ENCODE measurements at regions of chr20 and their contacts with region 1.

Region 1: DNA sequence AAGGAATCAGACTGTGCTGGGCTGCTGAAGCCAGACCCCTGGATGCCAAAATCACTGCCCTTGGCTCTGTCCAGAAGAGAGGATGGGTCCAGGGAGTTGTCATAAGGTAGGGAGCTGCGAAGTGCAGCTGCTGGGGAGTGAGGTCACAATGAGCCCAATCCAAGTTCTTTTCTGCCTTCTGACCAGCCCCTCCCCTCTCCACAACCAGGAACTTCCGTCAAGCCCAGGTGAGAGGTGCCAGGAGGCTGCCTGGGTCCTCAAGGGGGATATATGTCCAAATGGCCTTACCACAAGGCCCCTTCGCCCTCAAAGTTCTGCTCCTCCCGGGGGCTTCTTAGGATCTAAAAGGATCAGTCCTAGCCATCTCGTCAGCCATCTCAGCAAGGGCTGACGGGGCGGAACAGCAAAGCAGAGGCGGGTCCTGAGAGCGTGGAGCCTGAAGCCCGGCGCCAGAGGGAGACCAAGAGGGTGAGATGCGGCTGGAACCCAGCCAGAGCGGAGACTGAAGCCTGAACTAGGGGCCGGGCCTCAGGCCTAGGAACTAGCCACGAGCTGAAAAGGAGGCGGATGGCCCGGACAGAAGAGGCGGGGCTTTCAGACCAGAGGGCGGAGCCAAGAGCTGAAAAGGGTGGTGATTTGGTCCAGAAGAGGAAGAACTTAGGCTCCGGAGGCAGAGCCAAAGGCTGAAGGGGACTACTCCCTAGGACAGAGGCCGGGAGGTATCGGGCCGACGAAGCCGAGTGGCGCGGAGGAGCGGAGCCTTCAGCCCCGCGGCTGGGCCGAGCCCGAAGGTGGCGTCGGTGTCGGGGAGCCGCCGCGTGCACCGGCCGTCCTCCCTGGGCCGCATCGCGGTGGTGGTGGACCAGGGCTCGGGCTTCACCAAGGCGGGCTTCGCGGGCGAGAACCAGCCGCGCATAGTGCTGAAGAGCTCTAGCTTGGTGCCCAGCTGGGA is at the start of gene ACTL10:
- DNase-seq: peak; percentile 88
- H3K4me3 Mint-ChIP-seq: peak within 1 kb of the TSS; percentile 91
- H3K27ac Mint-ChIP-seq: peak within 1 kb of the TSS; percentile 90
- H3K4me1 Mint-ChIP-seq: peaks cover 58% of the 10 kb centered on the region
- H3K27me3 Mint-ChIP-seq: no peaks in the 10 kb centered on the region
- total RNA-seq, gene ACTL10: 3.7 to 4.5 TPM

Region 2: DNA sequence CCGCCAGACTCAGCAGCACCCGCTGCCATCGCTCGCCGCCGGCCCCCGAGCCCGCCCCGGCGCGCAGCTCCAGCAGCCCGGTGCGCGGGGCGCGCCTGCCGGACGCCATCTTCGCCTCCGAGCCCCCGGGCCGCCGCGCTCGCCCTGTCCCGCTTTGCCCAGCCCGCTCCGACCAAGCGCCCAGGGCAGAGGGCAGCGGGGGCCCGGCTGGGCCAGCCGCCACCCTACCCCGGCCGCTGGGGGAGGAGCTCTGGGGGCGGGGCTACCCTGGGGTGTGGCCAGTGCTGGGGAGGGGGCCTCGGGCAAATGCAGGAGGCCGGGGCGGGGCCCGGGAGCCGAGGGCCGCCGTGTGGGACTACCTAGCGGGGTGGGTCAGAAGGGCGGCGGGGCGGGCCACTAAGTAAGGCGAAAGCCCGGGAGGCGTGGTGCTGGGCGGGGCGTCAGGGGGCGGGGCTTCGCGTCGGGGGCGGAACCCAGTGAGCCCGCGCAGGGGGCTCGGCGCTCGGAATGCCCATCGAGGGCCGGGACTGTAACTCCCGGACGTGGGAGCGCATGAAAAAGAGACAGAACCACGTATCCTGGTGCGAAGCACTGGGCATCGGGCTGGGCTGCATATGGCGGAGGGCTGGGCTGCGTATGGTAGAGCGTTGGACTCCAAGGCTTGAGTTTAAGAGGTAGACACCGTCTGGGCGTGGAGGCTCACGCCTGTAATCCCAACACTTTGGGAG is 222.9 kb before region 1 on chr20 and contains the start of gene SNTA1:
- CTCF ChIA-PET with region 1: interaction called, 7 read pairs
- POLR2A ChIA-PET with region 1: interaction called, 17 read pairs
- DNase-seq: peak; percentile 92
- H3K4me3 Mint-ChIP-seq: peak within 1 kb of the TSS; percentile 87
- H3K27ac Mint-ChIP-seq: peak within 1 kb of the TSS; percentile 89
- H3K4me1 Mint-ChIP-seq: peaks cover 23% of the 10 kb centered on the region
- H3K27me3 Mint-ChIP-seq: peaks cover 12% of the 10 kb centered on the region
- total RNA-seq, gene SNTA1: 5.6 to 6.9 TPM

Region 3: DNA sequence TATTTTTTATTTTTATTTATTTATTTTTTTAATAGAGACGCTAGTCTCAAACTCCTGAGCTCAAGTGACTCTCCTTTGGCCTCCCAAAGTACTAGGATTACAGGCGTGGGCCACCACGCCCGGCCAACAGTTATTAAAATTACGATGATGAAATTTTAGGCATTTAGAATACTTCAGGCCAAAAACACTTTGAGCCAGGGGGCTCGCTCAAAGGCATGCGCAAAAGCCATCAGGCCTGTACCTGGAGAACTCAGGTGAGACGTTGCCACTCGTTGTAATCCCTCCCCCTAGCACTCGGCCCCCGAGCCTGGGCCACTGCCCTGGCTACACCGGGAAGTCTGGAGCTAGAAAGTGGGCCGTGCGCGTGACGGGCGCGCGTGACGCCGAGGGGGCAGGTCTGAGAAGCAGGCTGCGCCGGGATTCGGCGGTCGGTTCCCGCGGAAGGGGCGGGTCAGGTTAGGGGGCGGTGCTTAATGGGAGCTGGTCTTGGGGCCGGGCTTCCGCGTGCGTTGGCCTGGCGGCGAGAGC is 177.0 kb before region 1 on chr20:
- CTCF ChIA-PET with region 1: interaction called, 12 read pairs
- POLR2A ChIA-PET with region 1: interaction called, 42 read pairs
- DNase-seq: peak; percentile 99
- H3K4me3 Mint-ChIP-seq: peak overlapping the region; percentile 84
- H3K27ac Mint-ChIP-seq: peak overlapping the region; percentile 75
- H3K4me1 Mint-ChIP-seq: peaks cover 14% of the 10 kb centered on the region
- H3K27me3 Mint-ChIP-seq: no peaks in the 10 kb centered on the region

Region 4: GRCh38 chr20:33568378-33568777 is 98.2 kb before region 1 on chr20:
- CTCF ChIA-PET with region 1: no interaction called
- POLR2A ChIA-PET with region 1: no interaction called
- DNase-seq: no peak
- H3K4me3 Mint-ChIP-seq: no peak overlapping the region
- H3K27ac Mint-ChIP-seq: no peak overlapping the region
- H3K4me1 Mint-ChIP-seq: peaks cover 8% of the 10 kb centered on the region
- H3K27me3 Mint-ChIP-seq: no peaks in the 10 kb centered on the region

Region 5: DNA sequence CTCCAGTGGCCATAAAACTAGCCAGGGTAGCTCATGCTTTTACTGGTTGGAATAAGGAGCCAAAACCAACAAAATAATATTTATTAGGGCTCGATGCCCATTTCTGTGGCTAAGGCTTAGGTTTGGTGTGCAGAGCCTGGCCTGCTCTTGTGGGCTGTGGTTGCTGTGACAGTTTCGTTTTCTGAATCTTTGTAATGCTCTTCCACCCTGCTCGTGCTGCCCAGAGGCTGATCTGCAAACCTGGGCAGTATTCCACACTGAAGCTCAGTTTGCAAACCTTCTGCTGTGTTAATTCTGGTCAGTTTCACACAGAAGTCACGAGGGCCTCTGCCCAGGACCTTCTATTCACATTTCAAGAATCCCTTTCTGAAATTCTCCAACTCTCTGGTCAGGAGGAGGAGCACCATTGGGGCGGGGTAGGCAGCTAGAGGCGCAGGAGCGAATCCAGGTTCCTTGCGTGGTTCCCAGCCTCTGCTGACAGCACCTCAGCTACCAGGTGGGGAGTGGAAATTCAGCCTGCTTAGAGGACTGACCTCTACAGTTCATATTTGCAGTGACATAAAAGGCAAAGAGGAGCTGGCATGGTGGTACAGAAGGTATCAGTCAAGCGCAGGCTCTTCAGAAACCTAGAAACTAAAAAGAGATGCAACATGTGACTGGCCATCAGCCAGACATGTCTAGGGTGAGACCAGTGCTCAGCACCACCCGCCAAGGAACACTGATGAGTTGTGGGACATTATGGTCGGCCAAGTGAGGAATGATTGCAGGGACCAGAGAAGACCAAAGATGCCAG is 18.8 kb before region 1 on chr20:
- CTCF ChIA-PET with region 1: interaction called, 6 read pairs
- POLR2A ChIA-PET with region 1: interaction called, 43 read pairs
- DNase-seq: peak; percentile 49
- H3K4me3 Mint-ChIP-seq: no peak overlapping the region
- H3K27ac Mint-ChIP-seq: no peak overlapping the region
- H3K4me1 Mint-ChIP-seq: peaks cover 54% of the 10 kb centered on the region
- H3K27me3 Mint-ChIP-seq: no peaks in the 10 kb centered on the region

Region 6: DNA sequence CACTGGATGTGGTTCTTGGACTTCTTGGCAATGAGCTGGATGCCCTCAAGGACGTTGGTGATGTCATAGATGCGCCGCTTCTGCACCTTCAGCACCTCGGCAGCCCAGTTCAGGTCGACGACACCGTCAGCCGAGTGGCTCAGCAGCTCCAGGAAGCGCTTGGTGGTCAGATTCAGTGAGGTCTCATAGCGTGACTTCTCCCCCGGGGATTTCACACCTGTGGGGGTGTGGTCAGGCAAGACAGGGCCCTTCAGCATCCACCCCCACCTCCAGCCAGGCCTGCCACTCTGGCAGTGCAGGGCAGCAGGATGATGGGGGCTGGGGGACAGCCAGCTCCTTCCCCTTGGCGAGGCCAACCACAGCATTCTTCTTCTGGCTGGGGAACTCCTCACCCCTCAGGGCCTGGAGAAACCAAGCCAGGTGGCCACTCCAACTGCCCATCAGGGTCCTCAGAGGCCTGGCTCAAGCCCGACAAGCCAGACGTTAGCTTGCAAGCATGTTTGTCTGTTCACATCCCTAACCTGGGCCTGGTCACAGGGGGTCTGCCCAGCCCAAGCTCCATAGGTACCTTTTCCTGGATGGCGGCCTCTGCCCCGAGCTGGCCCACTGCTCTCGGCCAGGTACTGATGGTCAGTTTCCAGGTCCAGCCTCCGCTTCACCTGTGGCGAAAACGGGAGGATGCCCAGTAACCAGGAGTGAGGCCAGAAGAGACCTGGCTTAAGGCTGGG is 13.4 kb after region 1 on chr20:
- CTCF ChIA-PET with region 1: interaction called, 63 read pairs
- POLR2A ChIA-PET with region 1: interaction called, 312 read pairs
- DNase-seq: peak; percentile 78
- H3K4me3 Mint-ChIP-seq: no peak overlapping the region
- H3K27ac Mint-ChIP-seq: peak overlapping the region; percentile 90
- H3K4me1 Mint-ChIP-seq: peaks cover 81% of the 10 kb centered on the region
- H3K27me3 Mint-ChIP-seq: no peaks in the 10 kb centered on the region

Region 7: DNA sequence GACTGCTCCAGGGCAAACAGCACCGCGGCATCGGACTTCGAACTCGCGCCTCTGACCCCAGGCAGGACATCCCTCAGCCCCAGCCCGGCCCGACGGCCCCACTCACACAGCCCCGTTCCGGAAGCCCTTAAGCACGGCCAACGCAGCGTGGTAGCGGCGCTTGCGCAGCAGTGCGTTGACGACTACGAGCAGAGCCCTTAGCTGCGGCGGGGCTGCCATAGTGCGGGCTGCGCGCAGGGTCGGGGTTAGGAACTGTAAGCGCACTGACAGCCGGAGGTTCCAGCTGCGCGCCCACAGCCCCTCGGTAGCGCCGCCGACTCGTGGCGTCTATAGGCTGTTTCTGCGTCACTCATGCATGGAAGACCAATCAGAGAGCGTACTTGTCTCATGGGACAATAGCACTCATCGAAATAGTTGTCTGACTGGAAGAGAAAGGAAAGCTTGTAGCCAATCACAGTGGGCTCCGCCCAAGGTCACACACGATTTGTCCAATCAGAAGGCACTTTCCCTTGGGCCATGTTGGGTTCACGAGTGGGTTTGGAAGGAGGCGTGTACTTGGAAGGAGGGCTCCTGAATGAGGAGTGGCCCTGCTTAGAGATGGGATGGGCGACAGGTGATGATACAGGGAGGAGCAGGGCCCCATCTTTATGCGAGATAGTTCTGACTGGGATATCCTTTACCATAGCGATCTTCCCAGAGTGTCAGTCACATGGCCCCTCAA is 53.6 kb after region 1 on chr20 and contains the start of gene PXMP4:
- CTCF ChIA-PET with region 1: interaction called, 11 read pairs
- POLR2A ChIA-PET with region 1: interaction called, 20 read pairs
- DNase-seq: peak; percentile 93
- H3K4me3 Mint-ChIP-seq: peak within 1 kb of the TSS; percentile 85
- H3K27ac Mint-ChIP-seq: peak within 1 kb of the TSS; percentile 59
- H3K4me1 Mint-ChIP-seq: peaks cover 28% of the 10 kb centered on the region
- H3K27me3 Mint-ChIP-seq: no peaks in the 10 kb centered on the region
- total RNA-seq, gene PXMP4: 13.9 to 15.8 TPM

Measured in activated CD4-positive, alpha-beta memory T cell treated with anti-CD3 and anti-CD28 coated beads, Interleukin-2, amount 10 ng/mL, durations not matched to agents 7 days and 5 days (primary cell).